ENCODE measurements at regions of chr7 and their contacts with region 1.

Region 1: DNA sequence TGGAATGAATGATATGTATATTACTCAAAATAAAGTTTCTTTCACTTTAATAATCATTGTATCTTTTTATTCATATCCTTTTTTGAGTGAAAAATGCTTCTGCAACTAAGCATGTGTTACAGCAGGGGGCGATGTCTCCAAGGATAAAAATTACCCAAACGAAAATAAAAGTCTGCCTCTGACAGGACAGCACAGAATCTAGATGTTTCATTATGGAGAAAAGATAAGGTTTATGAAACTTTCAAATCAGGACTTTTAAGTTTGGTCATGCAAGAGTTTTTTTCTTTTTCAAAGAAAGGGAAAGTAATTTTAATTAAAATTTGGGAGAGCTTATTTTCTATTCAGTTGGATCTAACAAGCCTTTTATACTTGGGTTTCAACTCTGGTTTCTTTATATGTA is 48.4 kb downstream of the TES start:
- DNase-seq: peak; percentile 50
- H3K4me3 ChIP-seq: no peak overlapping the region
- H3K27ac ChIP-seq: peak overlapping the region; percentile 95
- H3K4me1 ChIP-seq: peaks cover 27% of the 10 kb centered on the region
- H3K27me3 ChIP-seq: no peaks in the 10 kb centered on the region
- CTCF ChIP-seq: peak; percentile 67 to 75

Region 2: GRCh38 chr7:116316833-116317612 is 58.3 kb after region 1 on chr7:
- CTCF ChIA-PET with region 1: no interaction called
- dilution Hi-C with region 1: no loop called
- in situ Hi-C with region 1: loop called in 1 of 2 experiments (anchors 5 kb)
- intact Hi-C with region 1: loop called (anchors 1 kb)
- DNase-seq: peak; percentile 100
- H3K4me3 ChIP-seq: peak overlapping the region in 2 of 3 experiments; percentile 4 to 10
- H3K27ac ChIP-seq: peak overlapping the region; percentile 94
- H3K4me1 ChIP-seq: peaks cover 24% of the 10 kb centered on the region
- H3K27me3 ChIP-seq: no peaks in the 10 kb centered on the region
- CTCF ChIP-seq: no peak

Region 3: DNA sequence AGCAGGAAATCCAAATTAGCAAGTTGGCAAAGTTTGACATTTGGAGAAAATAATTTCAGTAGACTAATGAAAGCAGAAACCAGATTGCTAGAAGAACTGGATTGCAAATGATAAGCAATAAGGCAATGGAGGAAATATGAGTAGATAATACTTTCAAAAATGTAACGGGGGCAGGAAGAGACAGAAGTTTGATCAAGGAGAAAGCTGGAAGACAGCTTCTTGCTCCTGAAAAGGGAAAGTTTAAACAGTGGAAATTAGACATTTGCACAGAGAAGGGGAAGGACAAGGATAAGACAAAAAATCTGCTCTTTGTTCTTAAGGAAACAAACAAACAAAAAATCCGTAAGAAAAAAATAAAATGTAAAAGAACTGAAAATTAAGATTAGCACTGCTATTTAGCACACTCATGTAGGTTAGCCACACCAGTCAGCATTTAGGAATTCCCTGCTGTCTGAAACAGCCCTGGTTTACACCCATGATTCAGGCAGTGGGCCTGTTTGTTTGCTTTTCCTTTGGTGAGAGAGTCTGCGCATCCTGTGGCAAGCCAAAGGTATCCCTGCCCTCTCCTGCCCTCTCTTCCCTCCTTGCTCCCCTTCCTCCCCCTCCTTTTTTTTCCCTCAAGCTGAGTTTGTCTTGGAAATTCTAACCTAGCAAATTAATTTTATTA is 136.5 kb after region 1 on chr7:
- CTCF ChIA-PET with region 1: no interaction called
- dilution Hi-C with region 1: no loop called
- in situ Hi-C with region 1: no loop called
- intact Hi-C with region 1: loop called (anchors 5 kb)
- DNase-seq: peak; percentile 93
- H3K4me3 ChIP-seq: peak overlapping the region in 1 of 3 experiments; percentile 2
- H3K27ac ChIP-seq: peak overlapping the region; percentile 98
- H3K4me1 ChIP-seq: peaks cover 32% of the 10 kb centered on the region
- H3K27me3 ChIP-seq: no peaks in the 10 kb centered on the region
- CTCF ChIP-seq: no peak

Region 4: DNA sequence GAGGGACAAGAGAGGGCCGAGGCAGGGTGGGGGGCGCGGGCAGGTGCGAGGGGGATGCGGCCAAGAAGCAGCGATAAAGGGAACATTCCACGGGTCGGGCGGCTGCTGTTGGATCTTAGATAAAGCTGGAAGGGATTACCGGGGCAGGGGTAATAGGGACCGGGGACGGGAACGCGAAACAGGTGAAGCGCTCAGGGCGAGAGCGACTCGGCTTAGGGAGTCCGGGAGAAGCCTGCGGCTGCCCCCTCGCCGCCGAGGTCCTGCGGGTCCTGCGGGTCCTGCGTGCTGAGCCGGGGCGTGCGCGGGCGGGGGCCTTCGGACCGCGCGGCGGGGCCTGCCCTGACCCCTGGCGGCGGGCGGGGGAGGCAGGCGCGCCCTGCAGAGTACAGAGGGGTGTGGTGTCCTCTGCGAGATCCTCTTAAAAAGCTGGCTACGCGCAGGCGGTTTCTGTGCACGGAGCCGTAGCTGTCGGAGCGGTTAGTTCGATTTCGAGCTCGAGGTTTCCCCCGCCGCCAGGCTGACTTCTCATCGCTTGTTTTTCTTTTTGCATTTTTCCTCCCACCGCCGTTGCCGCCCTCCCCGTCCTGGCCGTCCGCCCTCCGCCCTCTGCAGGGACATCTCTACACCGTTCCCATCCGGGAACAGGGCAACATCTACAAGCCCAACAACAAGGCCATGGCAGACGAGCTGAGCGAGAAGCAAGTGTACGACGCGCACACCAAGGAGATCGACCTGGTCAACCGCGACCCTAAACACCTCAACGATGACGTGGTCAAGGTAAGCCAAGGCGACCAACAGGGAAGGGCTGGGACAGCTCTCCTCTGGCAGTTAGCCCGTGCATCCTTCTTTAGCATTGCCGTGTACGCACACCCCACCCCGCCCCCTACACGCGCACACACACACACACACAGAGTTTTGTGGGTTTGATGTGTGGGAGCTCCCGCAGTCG is 267.5 kb after region 1 on chr7:
- CTCF ChIA-PET with region 1: interaction called, 11 read pairs
- dilution Hi-C with region 1: loop called (anchors 5 kb)
- in situ Hi-C with region 1: loop called (anchors 5 kb)
- intact Hi-C with region 1: loop called (anchors 1 kb)
- DNase-seq: peak; percentile 77
- H3K4me3 ChIP-seq: peak overlapping the region; percentile 72 to 78 (median 76)
- H3K27ac ChIP-seq: peak overlapping the region; percentile 96
- H3K4me1 ChIP-seq: peaks cover 62% of the 10 kb centered on the region
- H3K27me3 ChIP-seq: no peaks in the 10 kb centered on the region
- CTCF ChIP-seq: peak; percentile 47 to 62

Region 5: DNA sequence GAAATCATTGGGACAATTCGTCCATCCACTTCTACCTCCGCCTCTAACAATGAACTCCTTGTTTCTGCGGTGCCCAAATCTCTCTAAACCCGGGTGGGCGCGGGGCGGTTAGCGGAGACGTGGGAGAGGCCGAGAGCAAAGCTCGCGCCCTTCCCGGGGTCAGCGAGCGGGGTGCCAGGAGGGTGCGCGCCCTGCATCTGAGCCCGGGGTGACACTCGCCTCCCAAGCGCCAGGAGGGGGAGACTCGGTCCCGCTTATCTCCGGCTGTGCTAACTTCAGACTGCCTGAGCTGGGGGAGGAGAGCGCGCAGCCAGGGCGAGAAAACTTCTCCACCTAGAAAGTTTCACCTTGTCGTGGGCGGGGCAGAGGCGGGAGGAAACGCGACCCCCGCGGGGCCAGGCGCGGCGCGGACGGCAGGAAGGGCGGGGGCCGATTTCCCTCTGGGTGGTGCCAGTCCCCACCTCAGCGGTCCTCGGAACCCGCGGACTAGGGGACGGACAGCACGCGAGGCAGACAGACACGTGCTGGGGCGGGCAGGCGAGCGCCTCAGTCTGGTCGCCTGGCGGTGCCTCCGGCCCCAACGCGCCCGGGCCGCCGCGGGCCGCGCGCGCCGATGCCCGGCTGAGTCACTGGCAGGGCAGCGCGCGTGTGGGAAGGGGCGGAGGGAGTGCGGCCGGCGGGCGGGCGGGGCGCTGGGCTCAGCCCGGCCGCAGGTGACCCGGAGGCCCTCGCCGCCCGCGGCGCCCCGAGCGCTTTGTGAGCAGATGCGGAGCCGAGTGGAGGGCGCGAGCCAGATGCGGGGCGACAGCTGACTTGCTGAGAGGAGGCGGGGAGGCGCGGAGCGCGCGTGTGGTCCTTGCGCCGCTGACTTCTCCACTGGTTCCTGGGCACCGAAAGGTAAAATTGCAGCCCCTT is 413.2 kb after region 1 on chr7 and contains the start of gene MET:
- CTCF ChIA-PET with region 1: no interaction called
- dilution Hi-C with region 1: no loop called
- in situ Hi-C with region 1: no loop called
- intact Hi-C with region 1: loop called (anchors 5 kb)
- DNase-seq: peak; percentile 95
- H3K4me3 ChIP-seq: peak within 1 kb of the TSS; percentile 92 to 98 (median 94)
- H3K27ac ChIP-seq: peak within 1 kb of the TSS; percentile 98
- H3K4me1 ChIP-seq: peaks cover 32% of the 10 kb centered on the region
- H3K27me3 ChIP-seq: no peaks in the 10 kb centered on the region
- CTCF ChIP-seq: peak; percentile 32 to 81
- total RNA-seq, gene MET: 112 to 179 TPM

Measured in mammary epithelial cell (primary cell).